ENCODE measurements at regions of chr16 and their contacts with region 1.

Region 1: GRCh38 chr16:84277237-84277823 is 17.3 kb upstream of the WFDC1 start:
- DNase-seq: peak; percentile 8
- H3K4me3 ChIP-seq: no peak overlapping the region
- H3K27ac ChIP-seq: no peak overlapping the region
- H3K4me1 ChIP-seq: no peaks in the 10 kb centered on the region
- H3K27me3 ChIP-seq: no peaks in the 10 kb centered on the region
- CTCF ChIP-seq: peak; percentile 84 to 87

Region 2: GRCh38 chr16:84084570-84085270 is 192.6 kb before region 1 on chr16:
- CTCF ChIA-PET with region 1: no interaction called
- dilution Hi-C with region 1: no loop called
- in situ Hi-C with region 1: no loop called
- intact Hi-C with region 1: no loop called
- DNase-seq: peak; percentile 44
- H3K4me3 ChIP-seq: no peak overlapping the region
- H3K27ac ChIP-seq: no peak overlapping the region
- H3K4me1 ChIP-seq: peaks cover 8% of the 10 kb centered on the region
- H3K27me3 ChIP-seq: no peaks in the 10 kb centered on the region
- CTCF ChIP-seq: peak; percentile 72 to 91

Region 3: GRCh38 chr16:84220851-84221250 is 56.5 kb before region 1 on chr16:
- CTCF ChIA-PET with region 1: no interaction called
- dilution Hi-C with region 1: no loop called
- in situ Hi-C with region 1: no loop called
- intact Hi-C with region 1: no loop called
- DNase-seq: no peak
- H3K4me3 ChIP-seq: no peak overlapping the region
- H3K27ac ChIP-seq: no peak overlapping the region
- H3K4me1 ChIP-seq: no peaks in the 10 kb centered on the region
- H3K27me3 ChIP-seq: no peaks in the 10 kb centered on the region
- CTCF ChIP-seq: no peak

Region 4: DNA sequence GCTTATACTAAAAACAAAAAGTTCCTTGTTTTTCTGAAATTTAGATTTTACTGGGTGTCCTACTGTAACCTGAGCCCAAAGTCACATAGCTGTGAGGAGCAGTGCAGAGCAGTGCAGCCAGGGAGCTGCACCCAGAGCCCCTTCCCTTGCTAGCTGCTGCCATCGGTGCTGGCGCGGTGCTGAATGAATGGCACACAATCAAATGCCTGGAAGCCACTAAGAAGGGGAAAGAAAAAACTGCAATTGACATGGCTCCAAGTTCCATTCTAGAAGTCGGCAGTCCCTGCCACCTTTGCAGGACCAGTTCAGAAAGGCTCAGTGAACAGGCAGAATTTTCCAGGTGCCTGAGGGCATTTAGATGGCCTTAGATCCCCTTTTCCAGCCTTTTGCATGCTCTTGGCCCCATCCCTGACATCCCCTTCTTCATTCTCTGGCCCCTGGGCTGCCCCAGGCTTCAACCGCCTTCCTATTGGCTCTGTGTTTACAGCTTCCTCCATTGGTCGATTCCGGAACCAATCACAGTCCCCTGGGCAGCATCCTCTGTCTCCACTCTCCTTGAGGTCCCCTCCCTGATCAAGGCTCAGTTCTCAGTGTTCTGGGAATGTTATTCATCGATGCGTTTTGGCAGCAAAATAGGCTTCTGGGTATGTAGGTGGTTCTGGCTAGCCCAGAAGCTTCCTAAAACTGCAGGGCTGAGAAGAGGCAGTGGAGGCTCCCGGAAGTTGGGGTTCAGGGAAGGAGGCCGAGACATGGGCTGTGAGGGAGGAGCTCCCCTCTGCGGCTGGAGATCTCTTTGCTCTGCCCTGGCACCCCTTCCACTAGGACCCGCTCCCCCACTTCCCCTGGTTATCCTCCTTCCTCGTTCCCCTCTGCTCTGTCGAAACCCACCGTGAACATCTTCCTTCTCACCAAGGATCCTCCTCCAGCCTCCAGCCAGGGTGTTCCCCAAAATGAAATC is 129.0 kb after region 1 on chr16:
- CTCF ChIA-PET with region 1: no interaction called
- dilution Hi-C with region 1: no loop called
- in situ Hi-C with region 1: no loop called
- intact Hi-C with region 1: loop called (anchors 1 kb)
- DNase-seq: no peak
- H3K4me3 ChIP-seq: no peak overlapping the region
- H3K27ac ChIP-seq: no peak overlapping the region
- H3K4me1 ChIP-seq: no peaks in the 10 kb centered on the region
- H3K27me3 ChIP-seq: peaks cover 7% of the 10 kb centered on the region
- CTCF ChIP-seq: peak in 1 of 2 donors; percentile 15

Region 5: GRCh38 chr16:84484579-84485254 is 207.4 kb after region 1 on chr16:
- CTCF ChIA-PET with region 1: no interaction called
- dilution Hi-C with region 1: no loop called
- in situ Hi-C with region 1: loop called in 1 of 2 experiments (anchors 25 kb)
- intact Hi-C with region 1: loop called (anchors 2 kb)
- DNase-seq: no peak
- H3K4me3 ChIP-seq: no peak overlapping the region
- H3K27ac ChIP-seq: no peak overlapping the region
- H3K4me1 ChIP-seq: peaks cover 11% of the 10 kb centered on the region
- H3K27me3 ChIP-seq: no peaks in the 10 kb centered on the region
- CTCF ChIP-seq: peak; percentile 46 to 67